HepG2 (cell line): ENCODE measurements at regions of chr2 and their contacts with region 1.

Region 1: DNA sequence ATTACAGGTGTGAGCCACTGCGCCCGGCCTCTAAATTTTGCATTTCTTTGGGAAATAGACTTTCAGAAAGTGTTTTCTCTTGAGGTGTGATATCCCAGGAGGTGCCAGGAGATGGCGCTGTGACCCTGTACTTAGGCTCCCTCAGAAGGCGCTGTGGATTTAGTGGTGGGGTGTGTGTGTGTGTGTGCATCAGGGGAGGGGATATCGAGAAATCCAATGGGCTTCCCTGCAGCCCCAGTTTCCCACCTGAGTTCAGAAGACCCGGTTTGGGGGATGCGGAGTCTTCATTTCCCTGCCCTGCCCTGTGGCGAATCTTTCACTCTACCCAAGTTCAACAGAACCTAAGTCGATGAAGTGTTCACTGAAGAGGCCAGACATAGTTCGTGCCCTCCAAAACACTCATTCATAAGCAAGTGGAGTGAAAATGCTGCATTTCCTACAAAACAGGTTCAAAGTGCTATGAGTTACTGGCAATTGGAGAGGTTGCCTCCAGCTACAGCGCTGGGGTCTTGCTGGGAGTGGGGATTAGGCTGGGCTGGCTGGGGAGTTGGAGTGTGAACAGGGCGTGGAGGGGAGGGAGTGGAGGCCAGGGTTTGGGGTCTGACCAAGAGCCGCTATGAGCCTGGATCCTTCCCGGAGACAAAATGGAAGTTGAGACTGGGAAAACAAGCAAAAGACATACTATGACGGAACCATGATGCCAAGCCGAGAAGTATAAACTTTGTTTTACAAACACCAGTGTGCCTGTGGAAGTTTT is 6.5 kb upstream of the WNT6 start:
- DNase-seq: peak; percentile 61
- ATAC-seq: peak; percentile 69
- H3K4me3 ChIP-seq: no peak overlapping the region
- H3K27ac ChIP-seq: no peak overlapping the region
- H3K4me1 ChIP-seq: peaks cover 30% of the 10 kb centered on the region
- H3K27me3 ChIP-seq: peaks cover 8 to 74% of the 10 kb centered on the region in 2 experiments; a peak in 4 of 5 replicates
- CTCF ChIP-seq: peak; percentile 94
- EP300 ChIP-seq: no peak
- POLR2A ChIP-seq: no peak
- RAD21 ChIP-seq: peak; percentile 86

Region 2: GRCh38 chr2:218648088-218648786 is 204.9 kb before region 1 on chr2:
- CTCF ChIA-PET with region 1: interaction called, 12 read pairs
- POLR2A ChIA-PET with region 1: no interaction called
- in situ Hi-C with region 1: no loop called
- intact Hi-C with region 1: no loop called
- DNase-seq: peak; percentile 56
- ATAC-seq: peak; percentile 84
- H3K4me3 ChIP-seq: no peak overlapping the region
- H3K27ac ChIP-seq: no peak overlapping the region
- H3K4me1 ChIP-seq: peaks cover 11% of the 10 kb centered on the region; the same call in 1 of the 2 replicates
- H3K27me3 ChIP-seq: no peaks in the 10 kb centered on the region
- CTCF ChIP-seq: peak; percentile 95
- EP300 ChIP-seq: no peak
- POLR2A ChIP-seq: no peak
- RAD21 ChIP-seq: peak; percentile 77

Region 3: DNA sequence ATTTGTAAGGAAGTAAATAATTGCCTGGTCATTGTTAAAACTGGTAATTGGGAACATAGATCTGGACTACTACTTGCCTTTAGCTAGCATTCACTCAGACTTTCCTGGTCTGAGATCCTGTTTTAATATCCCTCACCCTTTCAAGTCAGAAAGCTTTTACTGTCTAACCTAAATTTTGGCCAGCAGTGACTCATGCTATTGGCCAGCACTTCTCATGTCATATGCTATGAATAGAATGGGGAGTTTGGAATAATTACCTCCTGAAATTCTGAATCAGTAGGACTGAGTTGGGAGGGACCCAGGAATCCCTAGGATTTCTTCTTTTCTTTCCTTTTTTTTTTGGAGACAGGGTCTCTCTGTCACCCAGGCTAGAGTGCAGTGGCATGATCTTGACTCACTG is 161.9 kb before region 1 on chr2:
- CTCF ChIA-PET with region 1: interaction called, 38 read pairs
- POLR2A ChIA-PET with region 1: no interaction called
- in situ Hi-C with region 1: no loop called
- intact Hi-C with region 1: no loop called
- DNase-seq: no peak
- ATAC-seq: no peak
- H3K4me3 ChIP-seq: no peak overlapping the region
- H3K27ac ChIP-seq: no peak overlapping the region
- H3K4me1 ChIP-seq: peaks cover 17% of the 10 kb centered on the region
- H3K27me3 ChIP-seq: no peaks in the 10 kb centered on the region
- CTCF ChIP-seq: no peak
- EP300 ChIP-seq: no peak
- POLR2A ChIP-seq: no peak
- RAD21 ChIP-seq: no peak

Region 4: DNA sequence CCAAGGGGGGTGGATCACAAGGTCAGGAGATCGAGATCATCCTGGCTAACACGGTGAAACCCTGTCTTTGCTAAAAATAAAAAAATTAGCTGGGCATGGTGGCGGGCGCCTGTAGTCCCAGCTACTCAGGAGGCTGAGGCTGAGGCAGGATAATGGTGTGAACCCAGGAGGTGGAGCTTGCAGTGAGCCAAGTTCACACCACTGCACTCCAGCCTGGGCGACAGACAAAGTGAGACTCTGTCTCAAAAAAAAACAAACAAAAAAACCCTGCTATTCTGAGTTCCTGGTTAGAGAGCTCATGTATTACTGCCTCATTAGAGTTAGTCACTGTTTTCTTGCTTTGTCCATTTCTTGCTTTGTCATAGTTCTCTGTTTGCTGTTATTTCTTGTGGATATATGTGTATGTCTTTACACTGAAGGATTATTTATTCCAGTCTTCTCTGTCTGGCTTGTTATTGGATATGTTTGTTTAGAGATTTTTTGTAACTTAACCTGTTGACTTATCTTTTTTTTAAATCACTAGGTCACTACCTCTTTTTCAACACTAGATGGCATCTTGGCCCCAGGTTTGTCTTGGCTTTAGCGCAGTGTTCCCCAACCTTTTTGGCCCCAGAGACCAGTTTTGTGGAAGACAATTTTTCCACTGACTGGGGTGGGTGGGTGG is 125.5 kb before region 1 on chr2:
- CTCF ChIA-PET with region 1: interaction called, 241 read pairs
- POLR2A ChIA-PET with region 1: interaction called, 7 read pairs
- in situ Hi-C with region 1: loop called (anchors 25 kb)
- intact Hi-C with region 1: no loop called
- DNase-seq: peak; percentile 66
- ATAC-seq: no peak
- H3K4me3 ChIP-seq: no peak overlapping the region
- H3K27ac ChIP-seq: no peak overlapping the region
- H3K4me1 ChIP-seq: peaks cover 44% of the 10 kb centered on the region
- H3K27me3 ChIP-seq: no peaks in the 10 kb centered on the region
- CTCF ChIP-seq: peak; percentile 77
- EP300 ChIP-seq: no peak
- POLR2A ChIP-seq: no peak
- RAD21 ChIP-seq: peak; percentile 77

Region 5: GRCh38 chr2:218761795-218762194 is 91.3 kb before region 1 on chr2:
- CTCF ChIA-PET with region 1: no interaction called
- POLR2A ChIA-PET with region 1: no interaction called
- in situ Hi-C with region 1: no loop called
- intact Hi-C with region 1: no loop called
- DNase-seq: no peak
- ATAC-seq: no peak
- H3K4me3 ChIP-seq: no peak overlapping the region
- H3K27ac ChIP-seq: no peak overlapping the region
- H3K4me1 ChIP-seq: peaks cover 79% of the 10 kb centered on the region
- H3K27me3 ChIP-seq: no peaks in the 10 kb centered on the region
- CTCF ChIP-seq: no peak
- EP300 ChIP-seq: no peak
- POLR2A ChIP-seq: no peak
- RAD21 ChIP-seq: no peak

Region 6: DNA sequence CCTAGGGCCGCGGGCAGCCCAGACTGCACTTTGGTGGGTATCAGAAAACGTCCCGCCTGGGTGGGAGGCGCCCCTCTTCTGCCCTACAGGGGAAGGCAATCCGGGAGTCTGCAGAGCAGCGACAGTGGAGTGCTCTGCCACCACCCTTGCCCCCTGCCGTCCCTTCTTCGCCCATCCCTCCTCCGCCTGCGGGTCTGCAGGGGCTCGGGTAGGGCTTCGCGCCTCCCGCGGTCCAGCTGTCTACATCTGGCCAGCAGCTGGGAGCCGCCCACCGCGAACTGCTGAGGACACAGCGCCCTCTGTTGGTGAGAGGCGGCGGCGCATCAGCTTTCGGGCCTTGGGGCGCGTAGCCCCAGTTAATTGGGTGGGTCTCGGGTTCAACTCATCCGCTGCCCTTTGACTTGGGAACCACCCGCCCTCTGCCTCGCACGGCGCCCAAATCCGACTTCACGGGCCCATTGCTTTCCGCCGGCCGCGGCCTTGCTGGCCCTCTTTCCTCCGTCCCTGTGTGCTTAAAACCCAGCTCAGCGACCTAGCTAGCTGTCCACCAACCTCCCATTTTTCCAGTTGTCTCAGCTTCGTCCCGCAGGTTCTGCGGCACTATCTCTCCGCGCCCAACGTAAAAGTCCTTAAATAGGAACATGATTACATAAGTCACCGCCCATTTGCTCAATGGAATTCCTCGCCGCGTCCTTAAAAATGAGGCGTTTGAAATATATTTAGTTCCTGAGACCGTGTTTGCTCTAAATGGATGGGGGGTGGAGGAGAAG is 45.2 kb after region 1 on chr2:
- CTCF ChIA-PET with region 1: interaction called, 32 read pairs
- POLR2A ChIA-PET with region 1: no interaction called
- in situ Hi-C with region 1: no loop called
- intact Hi-C with region 1: loop called (anchors 1 kb)
- DNase-seq: peak; percentile 33
- ATAC-seq: peak; percentile 84
- H3K4me3 ChIP-seq: peak overlapping the region in 2 of 3 experiments; percentile 13 to 51; a peak in 2 of 6 replicates
- H3K27ac ChIP-seq: no peak overlapping the region
- H3K4me1 ChIP-seq: peaks cover 48% of the 10 kb centered on the region
- H3K27me3 ChIP-seq: peaks cover 24 to 73% of the 10 kb centered on the region in 2 experiments; a peak in 4 of 5 replicates
- CTCF ChIP-seq: peak; percentile 100
- EP300 ChIP-seq: no peak
- POLR2A ChIP-seq: no peak
- RAD21 ChIP-seq: peak; percentile 93

Region 7: DNA sequence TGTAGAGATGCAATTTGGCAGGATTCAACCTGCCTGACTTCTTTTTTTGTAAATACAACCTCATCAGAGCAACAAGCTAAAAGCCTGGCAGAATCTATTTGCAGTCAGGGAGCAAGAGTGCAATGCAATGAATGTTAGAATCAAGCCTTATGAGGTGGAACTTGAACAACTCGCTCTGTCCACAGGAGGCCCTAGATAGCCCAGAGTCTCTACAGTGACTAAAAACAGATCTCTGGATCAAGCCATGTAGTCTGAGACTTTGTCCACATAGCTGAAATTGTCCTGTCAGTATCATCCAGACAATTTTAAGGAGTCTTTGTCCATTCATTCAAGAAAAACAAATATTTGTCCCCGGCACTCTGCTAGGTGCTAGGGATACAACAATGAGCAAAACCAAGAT is 74.3 kb after region 1 on chr2:
- CTCF ChIA-PET with region 1: no interaction called
- POLR2A ChIA-PET with region 1: no interaction called
- in situ Hi-C with region 1: no loop called
- intact Hi-C with region 1: no loop called
- DNase-seq: no peak
- ATAC-seq: peak; percentile 83
- H3K4me3 ChIP-seq: no peak overlapping the region
- H3K27ac ChIP-seq: no peak overlapping the region
- H3K4me1 ChIP-seq: peaks cover 6% of the 10 kb centered on the region; the same call in 1 of the 2 replicates
- H3K27me3 ChIP-seq: no peaks in the 10 kb centered on the region
- CTCF ChIP-seq: no peak
- EP300 ChIP-seq: no peak
- POLR2A ChIP-seq: no peak
- RAD21 ChIP-seq: no peak